ENCODE measurements at regions of chrX and their contacts with region 1.

Region 1: GRCh38 chrX:137567682-137568578 is 2.0 kb downstream of the ZIC3 start:
- DNase-seq: no peak
- ATAC-seq: no peak
- H3K4me3 ChIP-seq: no peak overlapping the region
- H3K4me3 Mint-ChIP-seq: peak overlapping the region in 9 of 10 donors; percentile 64 to 84 (median 77)
- H3K27ac ChIP-seq: no peak overlapping the region
- H3K27ac Mint-ChIP-seq: peak overlapping the region in 1 of 9 donors; percentile 81
- H3K4me1 ChIP-seq: peaks cover 0 to 4% of the 10 kb centered on the region in 2 donors
- H3K4me1 Mint-ChIP-seq: peaks cover 6 to 27% (median 16%) of the 10 kb centered on the region in 7 donors
- H3K27me3 ChIP-seq: peaks cover 0 to 16% of the 10 kb centered on the region in 2 donors
- H3K27me3 Mint-ChIP-seq: peaks cover 54 to 76% (median 57%) of the 10 kb centered on the region in 5 donors

Region 2: DNA sequence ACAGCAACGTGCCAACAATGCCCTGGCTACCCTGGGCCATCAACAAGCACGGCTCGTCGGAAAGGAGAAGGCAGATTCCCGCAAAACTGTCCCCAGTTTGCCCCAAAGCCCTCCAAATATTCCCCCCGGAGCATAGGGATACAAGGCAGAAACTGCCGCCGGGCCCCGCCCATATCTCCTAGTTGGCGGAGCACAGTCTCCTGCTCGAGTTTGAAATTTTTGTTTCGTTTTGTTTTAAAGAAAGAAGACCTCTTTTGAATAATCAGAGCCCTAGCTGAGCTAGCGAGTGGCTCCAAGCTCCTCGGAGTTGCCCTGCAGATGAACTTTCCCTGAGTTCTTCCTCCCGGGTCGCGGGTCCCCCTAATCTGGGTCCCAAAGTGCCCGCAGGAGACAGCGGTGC is 140.1 kb before region 1 on chrX:
- CTCF ChIA-PET with region 1: no interaction called
- POLR2A ChIA-PET with region 1: no interaction called
- intact Hi-C with region 1: loop called in 1 of 2 experiments (anchors 2 kb)
- DNase-seq: no peak
- ATAC-seq: peak; percentile 22
- H3K4me3 ChIP-seq: peak overlapping the region; percentile 51
- H3K4me3 Mint-ChIP-seq: peak overlapping the region; percentile 55 to 86 (median 82)
- H3K27ac ChIP-seq: no peak overlapping the region
- H3K27ac Mint-ChIP-seq: no peak overlapping the region
- H3K4me1 ChIP-seq: peaks cover 0 to 13% of the 10 kb centered on the region in 2 donors
- H3K4me1 Mint-ChIP-seq: peaks cover 0 to 24% (median 10%) of the 10 kb centered on the region in 7 donors
- H3K27me3 ChIP-seq: peaks cover 0 to 26% of the 10 kb centered on the region in 2 donors
- H3K27me3 Mint-ChIP-seq: peaks cover 30 to 68% (median 51%) of the 10 kb centered on the region in 5 donors

Region 3: GRCh38 chrX:137549851-137550664 is 17.9 kb before region 1 on chrX:
- CTCF ChIA-PET with region 1: no interaction called
- POLR2A ChIA-PET with region 1: no interaction called
- intact Hi-C with region 1: loop called in 1 of 2 experiments (anchors 2 kb)
- DNase-seq: no peak
- ATAC-seq: no peak
- H3K4me3 ChIP-seq: no peak overlapping the region
- H3K4me3 Mint-ChIP-seq: peak overlapping the region in 8 of 10 donors; percentile 10 to 75 (median 60)
- H3K27ac ChIP-seq: no peak overlapping the region
- H3K27ac Mint-ChIP-seq: peak overlapping the region in 1 of 9 donors; percentile 46
- H3K4me1 ChIP-seq: no peaks in the 10 kb centered on the region
- H3K4me1 Mint-ChIP-seq: peaks cover 0 to 17% (median 14%) of the 10 kb centered on the region in 7 donors
- H3K27me3 ChIP-seq: no peaks in the 10 kb centered on the region
- H3K27me3 Mint-ChIP-seq: peaks cover 24 to 52% (median 47%) of the 10 kb centered on the region in 5 donors

Region 4: DNA sequence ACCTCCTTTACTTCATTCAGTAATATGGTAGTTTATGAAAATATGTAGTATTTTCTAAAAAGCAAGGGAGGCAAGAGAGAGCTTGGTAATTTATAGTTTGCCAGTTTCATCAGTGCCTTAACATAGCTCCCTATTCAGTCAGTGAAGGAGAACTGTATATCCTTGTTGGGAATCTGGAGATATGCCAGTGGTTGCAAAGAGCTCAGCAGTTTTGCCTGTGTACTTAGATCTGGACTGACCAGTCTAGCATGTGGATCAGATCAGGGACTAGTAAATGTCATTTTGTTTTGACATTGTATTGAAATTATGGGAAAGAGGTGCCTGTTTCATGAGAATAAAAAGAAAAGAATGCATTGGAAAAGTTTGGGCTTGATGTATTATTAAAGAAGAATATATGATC is 86.5 kb after region 1 on chrX:
- CTCF ChIA-PET with region 1: no interaction called
- POLR2A ChIA-PET with region 1: no interaction called
- intact Hi-C with region 1: no loop called
- DNase-seq: no peak
- ATAC-seq: no peak
- H3K4me3 ChIP-seq: no peak overlapping the region
- H3K4me3 Mint-ChIP-seq: no peak overlapping the region
- H3K27ac ChIP-seq: no peak overlapping the region
- H3K27ac Mint-ChIP-seq: no peak overlapping the region
- H3K4me1 ChIP-seq: no peaks in the 10 kb centered on the region
- H3K4me1 Mint-ChIP-seq: no peaks in the 10 kb centered on the region
- H3K27me3 ChIP-seq: no peaks in the 10 kb centered on the region
- H3K27me3 Mint-ChIP-seq: peaks cover 0 to 10% (median 8%) of the 10 kb centered on the region in 5 donors

Measured in naive thymus-derived CD4-positive, alpha-beta T cell (primary cell).